ENCODE measurements at regions of chr11 and their contacts with region 1.

Region 1: GRCh38 chr11:65204646-65205601 is 23.2 kb downstream of the CAPN1 start:
- DNase-seq: peak; percentile 54
- H3K4me3 Mint-ChIP-seq: no peak overlapping the region
- H3K27ac Mint-ChIP-seq: no peak overlapping the region
- H3K4me1 Mint-ChIP-seq: no peaks in the 10 kb centered on the region
- H3K27me3 Mint-ChIP-seq: no peaks in the 10 kb centered on the region

Region 2: GRCh38 chr11:65314501-65315203 is 109.7 kb after region 1 on chr11 and contains the start of gene CDC42EP2:
- CTCF ChIA-PET with region 1: interaction called, 43 read pairs
- intact Hi-C with region 1: loop called (anchors 2 kb)
- DNase-seq: peak; percentile 72
- H3K4me3 Mint-ChIP-seq: peak within 1 kb of the TSS; percentile 74
- H3K27ac Mint-ChIP-seq: no peak within 1 kb of the TSS
- H3K4me1 Mint-ChIP-seq: peaks cover 5% of the 10 kb centered on the region
- H3K27me3 Mint-ChIP-seq: peaks cover 8% of the 10 kb centered on the region
- total RNA-seq, gene CDC42EP2: 0.57 to 1.5 TPM

Measured in activated naive CD4-positive, alpha-beta T cell treated with anti-CD3 and anti-CD28 coated beads for 36 hours (primary cell).